Breast epithelium (tissue), 4 donors: ENCODE measurements at regions of chr7 and their contacts with region 1.

Region 1: DNA sequence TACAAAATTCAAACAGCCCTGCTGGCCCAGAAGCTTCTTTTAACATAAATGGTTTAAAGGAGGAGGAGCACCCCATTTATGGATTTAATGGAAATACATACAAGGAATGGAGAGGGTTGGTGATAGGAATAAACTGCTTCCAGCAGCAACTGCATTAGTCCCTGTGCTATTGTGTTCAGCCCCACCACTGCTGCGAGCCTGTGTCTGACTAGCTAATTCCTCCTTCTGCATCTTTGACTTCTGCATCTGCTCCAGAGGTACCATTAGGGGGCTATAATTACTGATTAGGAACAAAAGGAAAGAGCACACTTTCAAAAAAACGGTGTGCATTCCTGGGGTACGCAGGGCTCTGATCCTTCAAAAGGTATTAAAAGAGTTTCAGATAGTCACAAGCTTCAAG is 24.8 kb downstream of the CDCA7L start:
- DNase-seq: no peak
- H3K4me3 ChIP-seq: no peak overlapping the region
- H3K27ac ChIP-seq: no peak overlapping the region
- H3K4me1 ChIP-seq: no peaks in the 10 kb centered on the region
- H3K27me3 ChIP-seq: no peaks in the 10 kb centered on the region
- CTCF ChIP-seq: no peak
- POLR2A ChIP-seq: no peak

Region 2: DNA sequence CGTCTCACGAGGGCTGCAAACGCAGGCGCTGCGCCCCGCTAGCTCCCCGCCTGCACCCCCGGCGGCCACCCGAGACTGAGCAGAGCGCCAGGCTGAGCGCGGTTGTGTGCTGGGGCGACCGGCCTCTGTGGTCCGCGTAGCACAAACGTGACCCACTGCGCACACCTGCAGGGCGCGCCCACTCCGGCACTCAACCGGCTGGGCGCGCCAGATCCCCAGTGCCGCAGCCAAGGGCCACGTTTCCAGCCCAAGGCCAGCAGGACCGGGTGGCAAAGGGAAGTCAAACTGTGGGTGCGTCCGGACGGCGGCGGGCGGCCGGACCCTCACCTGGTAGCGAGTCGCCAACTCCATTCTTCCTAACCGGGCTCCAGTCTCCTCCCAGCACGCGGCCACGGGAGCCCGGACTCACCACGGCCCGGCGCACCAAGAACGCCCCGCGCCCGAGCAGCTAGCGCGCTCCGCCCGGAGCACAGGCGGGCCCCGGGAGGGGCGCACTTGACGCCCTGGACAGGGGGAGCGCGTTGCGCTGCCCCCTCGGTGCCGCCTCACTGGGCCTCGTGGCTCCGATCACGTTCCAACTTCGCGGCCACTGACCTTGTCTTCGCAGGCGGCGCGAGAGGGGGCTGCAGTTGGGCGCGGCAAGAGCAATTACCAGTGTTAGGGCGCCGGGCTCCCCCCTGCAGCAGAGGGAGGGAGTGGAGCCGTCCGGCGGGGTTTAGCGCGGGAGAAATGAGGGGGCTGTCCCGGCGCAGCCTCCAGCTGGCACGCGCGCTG is 24.7 kb after region 1 on chr7 and contains the start of gene CDCA7L:
- intact Hi-C with region 1: loop called (anchors 2 kb)
- DNase-seq: peak; percentile 37 to 77
- H3K4me3 ChIP-seq: peak within 1 kb of the TSS; percentile 67 to 82 (median 74)
- H3K27ac ChIP-seq: peak within 1 kb of the TSS; percentile 81 to 91
- H3K4me1 ChIP-seq: no peaks in the 10 kb centered on the region
- H3K27me3 ChIP-seq: no peaks in the 10 kb centered on the region
- CTCF ChIP-seq: no peak
- POLR2A ChIP-seq: no peak
- total RNA-seq, gene CDCA7L: 11.2 to 42.1 (median 20.3) TPM